ENCODE measurements at regions of chr14 and their contacts with region 1.

Region 1: DNA sequence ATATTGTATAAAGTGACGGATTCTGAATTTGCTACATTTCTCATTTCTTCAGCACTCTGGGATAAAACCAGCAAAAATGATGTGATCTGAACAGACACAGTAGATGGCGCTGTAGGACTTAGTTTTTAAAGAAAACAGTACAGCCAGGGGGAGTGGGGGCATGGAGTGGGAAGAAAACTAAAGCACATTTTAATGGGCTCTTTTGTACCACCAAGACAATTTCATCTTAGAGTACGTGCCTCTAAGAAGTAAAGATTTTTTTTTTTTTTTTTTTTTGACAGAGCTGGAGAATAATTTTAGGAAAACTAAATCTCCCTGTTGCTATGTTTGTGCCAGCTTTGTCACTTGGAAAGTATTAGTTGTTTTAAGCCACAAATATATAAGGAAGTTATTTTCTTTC is 124.4 kb downstream of the RAD51B start:
- DNase-seq: peak; percentile 88
- H3K4me3 ChIP-seq: no peak overlapping the region
- H3K27ac ChIP-seq: peak overlapping the region; percentile 38 to 84
- H3K4me1 ChIP-seq: peaks cover 16% of the 10 kb centered on the region
- H3K27me3 ChIP-seq: no peaks in the 10 kb centered on the region
- CTCF ChIP-seq: peak; percentile 51 to 95 (median 85)
- POLR2A ChIP-seq: no peak

Region 2: DNA sequence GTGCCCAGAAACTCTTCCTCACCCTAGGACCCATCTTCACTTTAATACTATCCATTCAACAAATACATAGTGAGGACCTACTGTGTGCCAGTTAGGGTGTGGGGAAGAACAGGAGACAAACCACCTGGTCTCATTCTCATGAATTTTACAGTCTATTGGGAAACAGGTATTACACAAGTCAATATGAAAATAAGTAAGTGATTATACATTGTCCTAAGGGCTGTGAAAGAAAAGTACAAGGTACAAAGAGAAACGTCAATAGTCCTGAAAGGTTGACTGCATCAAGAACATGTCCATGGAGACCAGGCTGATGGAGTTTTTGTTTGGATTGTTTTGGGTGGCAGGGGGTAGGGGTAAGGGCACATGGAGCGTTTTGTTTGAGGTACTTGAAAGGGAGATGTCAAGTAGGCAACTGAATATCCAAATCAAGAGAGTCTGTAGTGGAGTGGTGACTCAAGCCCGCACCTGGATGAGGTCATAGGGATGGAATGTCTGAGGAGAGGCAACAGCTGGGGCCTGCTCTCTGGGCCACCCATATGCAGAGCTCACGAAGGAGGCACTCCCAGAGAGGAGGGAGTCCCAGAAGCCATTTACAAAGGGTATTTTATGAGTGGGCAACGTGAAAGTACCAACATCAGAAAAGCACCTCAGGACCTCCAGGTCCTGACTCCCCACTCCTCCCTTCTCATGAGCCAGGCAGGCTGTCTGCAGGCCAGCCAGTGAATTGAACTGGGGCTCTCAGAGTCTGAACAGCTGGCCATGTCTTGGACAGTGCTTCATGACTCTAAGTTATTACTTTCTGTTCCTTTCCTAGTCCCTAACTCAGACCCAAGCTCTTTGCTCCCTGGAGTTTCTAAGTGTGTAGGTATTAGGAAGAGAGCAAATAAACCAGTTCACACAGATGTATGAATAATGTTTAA is 577.0 kb after region 1 on chr14:
- intact Hi-C with region 1: loop called (anchors 10 kb)
- DNase-seq: peak; percentile 43
- H3K4me3 ChIP-seq: no peak overlapping the region
- H3K27ac ChIP-seq: peak overlapping the region; percentile 52 to 61
- H3K4me1 ChIP-seq: peaks cover 6% of the 10 kb centered on the region
- H3K27me3 ChIP-seq: no peaks in the 10 kb centered on the region
- CTCF ChIP-seq: no peak
- POLR2A ChIP-seq: no peak